ENCODE measurements at regions of chr3 and their contacts with region 1.

Region 1: DNA sequence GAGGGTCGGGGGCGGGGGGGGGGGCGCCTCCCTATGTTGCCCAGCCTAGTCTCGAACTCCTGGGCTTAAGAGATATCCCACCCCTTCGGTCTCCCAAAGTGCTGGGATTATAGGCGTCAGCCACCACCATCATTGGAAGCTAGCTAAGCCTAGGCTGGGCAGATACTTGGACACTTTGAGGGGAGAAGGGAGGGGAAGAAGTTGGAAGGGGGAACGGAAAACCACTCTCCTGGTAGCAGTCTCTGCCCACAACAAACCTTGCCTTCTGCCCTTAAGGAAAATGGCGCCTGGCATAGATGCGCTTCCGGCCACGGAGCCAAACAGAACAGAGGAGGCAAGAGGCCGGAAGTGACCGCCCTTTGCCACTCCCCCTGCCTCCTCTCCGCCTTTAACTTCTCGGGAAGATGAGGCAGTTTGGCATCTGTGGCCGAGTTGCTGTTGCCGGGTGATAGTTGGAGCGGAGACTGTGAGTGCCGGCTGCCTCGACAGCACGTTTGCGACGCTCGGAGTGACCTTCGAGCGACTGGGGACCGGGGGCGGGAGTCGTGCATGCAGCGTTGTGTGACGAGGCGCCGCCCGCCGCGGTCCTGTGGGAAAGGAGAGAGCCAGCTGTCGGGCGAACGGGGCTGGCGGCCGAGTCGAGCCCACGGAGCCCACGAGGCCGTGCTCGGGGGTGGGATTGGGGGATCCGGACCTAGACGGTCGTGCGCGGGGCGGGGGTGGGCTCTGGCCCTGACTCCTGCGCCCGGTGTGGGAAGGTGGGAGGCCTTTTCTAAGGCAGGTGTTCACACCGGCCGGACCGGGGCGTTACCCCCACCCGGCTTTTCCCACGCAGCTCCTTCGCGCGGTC is at the start of gene MFN1:
- DNase-seq: peak; percentile 98
- H3K4me3 ChIP-seq: peak within 1 kb of the TSS; percentile 72 to 85 (median 80)
- H3K27ac ChIP-seq: peak within 1 kb of the TSS; percentile 81 to 91 (median 88)
- H3K4me1 ChIP-seq: peaks cover 0 to 26% (median 13%) of the 10 kb centered on the region in 4 donors
- H3K27me3 ChIP-seq: no peaks in the 10 kb centered on the region
- CTCF ChIP-seq: no peak
- EP300 ChIP-seq: no peak
- POLR2A ChIP-seq: peak; percentile 22 to 61
- total RNA-seq, gene MFN1: 27.6 to 42.1 (median 37.0) TPM

Region 2: GRCh38 chr3:179451265-179452175 is 104.0 kb after region 1 on chr3 and contains the start of gene GNB4:
- intact Hi-C with region 1: loop called (anchors 5 kb)
- DNase-seq: peak; percentile 88
- H3K4me3 ChIP-seq: peak within 1 kb of the TSS; percentile 63 to 84 (median 68)
- H3K27ac ChIP-seq: peak within 1 kb of the TSS; percentile 88 to 96 (median 94)
- H3K4me1 ChIP-seq: peaks cover 0 to 35% (median 25%) of the 10 kb centered on the region in 4 donors
- H3K27me3 ChIP-seq: no peaks in the 10 kb centered on the region
- CTCF ChIP-seq: no peak
- EP300 ChIP-seq: no peak
- POLR2A ChIP-seq: no peak
- total RNA-seq, gene GNB4: 32.5 to 44.3 (median 37.4) TPM

Region 3: DNA sequence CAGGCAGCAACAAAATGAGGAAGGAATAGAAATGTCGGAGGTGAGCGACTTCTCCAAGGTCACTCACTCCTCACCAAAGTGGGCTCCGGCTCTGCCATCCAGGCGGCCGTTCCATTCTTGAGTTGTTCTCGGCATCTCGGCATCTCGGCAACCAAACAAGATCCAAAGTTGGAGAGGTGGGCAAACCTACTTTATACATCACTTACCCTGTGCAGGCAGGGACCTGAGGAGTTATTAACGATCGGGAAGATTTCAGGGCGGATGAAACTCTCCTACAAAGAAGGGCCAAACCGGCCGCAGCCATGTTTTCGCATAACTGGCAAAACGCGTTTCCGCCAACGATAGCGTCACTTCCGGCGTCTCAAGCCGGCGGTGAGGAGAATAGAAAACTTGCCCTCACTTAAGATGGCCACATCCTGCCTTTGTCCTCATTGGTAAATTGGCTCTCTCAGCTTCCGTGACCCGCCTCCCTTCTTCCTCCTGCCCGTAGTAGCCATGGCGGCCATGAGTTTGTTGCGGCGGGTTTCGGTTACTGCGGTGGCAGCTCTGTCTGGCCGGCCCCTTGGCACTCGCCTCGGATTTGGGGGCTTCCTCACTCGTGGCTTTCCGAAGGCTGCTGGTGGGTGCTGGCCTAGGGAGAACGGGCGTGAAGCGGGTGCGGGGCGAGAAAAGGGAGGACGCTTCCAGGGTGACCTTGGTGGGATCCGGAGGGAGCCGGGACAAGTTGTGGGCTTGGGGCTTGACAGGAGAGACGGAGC is 256.9 kb after region 1 on chr3 and contains the starts of genes MRPL47 and NDUFB5:
- intact Hi-C with region 1: loop called (anchors 10 kb)
- DNase-seq: peak; percentile 97
- H3K4me3 ChIP-seq: peak within 1 kb of the TSS; percentile 78 to 88 (median 80)
- H3K27ac ChIP-seq: peak within 1 kb of the TSS; percentile 89 to 95 (median 92)
- H3K4me1 ChIP-seq: peaks cover 0 to 44% (median 28%) of the 10 kb centered on the region in 4 donors
- H3K27me3 ChIP-seq: no peaks in the 10 kb centered on the region
- CTCF ChIP-seq: no peak
- EP300 ChIP-seq: no peak
- POLR2A ChIP-seq: peak; percentile 90 to 91
- total RNA-seq, gene MRPL47: 26.0 to 58.5 (median 29.0) TPM
- total RNA-seq, gene NDUFB5: 107 to 216 (median 193) TPM

Measured in sigmoid colon (tissue), 7 donors.